AG04450 (cell line): ENCODE measurements at regions of chr17 and their contacts with region 1.

Region 1: GRCh38 chr17:57995076-57995956 is 7.3 kb upstream of the VEZF1 start:
- DNase-seq: peak; percentile 59
- H3K4me3 ChIP-seq: no peak overlapping the region
- H3K27ac ChIP-seq: no peak overlapping the region
- H3K27me3 ChIP-seq: no peaks in the 10 kb centered on the region
- CTCF ChIP-seq: peak; percentile 73

Region 2: DNA sequence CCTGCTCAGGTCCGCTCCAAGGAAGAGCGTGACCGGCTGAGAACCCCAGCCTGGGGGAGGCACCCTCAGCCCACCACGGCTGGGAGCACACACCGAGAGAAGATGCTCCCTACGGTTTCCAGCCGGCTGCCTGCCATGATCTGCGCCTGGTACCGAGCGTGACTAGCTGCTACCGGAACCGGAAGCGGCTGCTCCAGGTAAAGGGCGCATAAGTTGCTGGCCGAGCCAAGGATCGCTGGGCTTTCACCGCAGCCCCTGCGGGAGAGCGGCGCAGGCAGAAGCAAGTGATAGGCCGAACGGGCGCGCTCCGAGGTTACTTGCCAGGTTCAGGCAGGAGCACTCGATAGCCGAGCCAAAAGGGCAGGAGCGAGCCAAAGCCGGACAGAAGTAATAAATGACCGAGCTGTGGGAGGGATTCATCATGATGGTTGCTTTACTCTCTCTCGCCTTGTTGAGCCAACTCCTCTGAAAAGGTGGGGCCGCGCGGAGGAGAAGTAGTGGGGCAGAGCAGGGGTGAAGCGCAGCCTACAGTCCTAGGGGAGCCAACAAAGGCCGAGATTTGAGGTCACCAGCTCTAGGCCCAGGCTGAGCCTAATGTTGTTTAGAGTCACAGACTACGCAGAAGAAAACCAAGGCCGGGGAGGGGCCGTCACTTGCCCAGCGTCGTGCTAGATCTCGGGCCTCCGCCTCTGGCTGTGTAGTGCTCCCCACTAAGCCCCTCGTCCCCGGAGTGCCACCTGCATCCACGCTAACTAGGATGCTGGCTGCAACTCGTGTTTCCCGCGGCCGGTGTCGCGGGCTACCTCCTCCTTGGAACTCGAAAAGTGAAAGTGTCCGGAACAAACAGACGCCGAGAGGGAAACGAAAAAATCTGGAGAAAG is 145.2 kb before region 1 on chr17 and contains the start of gene MRPS23:
- CTCF ChIA-PET with region 1: interaction called, 661 read pairs
- POLR2A ChIA-PET with region 1: interaction called, 7 read pairs
- DNase-seq: peak; percentile 97
- H3K4me3 ChIP-seq: peak within 1 kb of the TSS; percentile 99
- H3K27ac ChIP-seq: peak within 1 kb of the TSS; percentile 85
- H3K27me3 ChIP-seq: no peaks in the 10 kb centered on the region
- CTCF ChIP-seq: no peak
- polyA plus RNA-seq, gene MRPS23: 27.5 and 34.1 TPM in 2 replicates

Region 3: GRCh38 chr17:57875309-57876115 is 119.8 kb before region 1 on chr17:
- CTCF ChIA-PET with region 1: interaction called, 52 read pairs
- POLR2A ChIA-PET with region 1: interaction called, 6 read pairs
- DNase-seq: peak; percentile 97
- H3K4me3 ChIP-seq: peak overlapping the region; percentile 42
- H3K27ac ChIP-seq: peak overlapping the region; percentile 100
- H3K27me3 ChIP-seq: no peaks in the 10 kb centered on the region
- CTCF ChIP-seq: peak; percentile 79

Region 4: DNA sequence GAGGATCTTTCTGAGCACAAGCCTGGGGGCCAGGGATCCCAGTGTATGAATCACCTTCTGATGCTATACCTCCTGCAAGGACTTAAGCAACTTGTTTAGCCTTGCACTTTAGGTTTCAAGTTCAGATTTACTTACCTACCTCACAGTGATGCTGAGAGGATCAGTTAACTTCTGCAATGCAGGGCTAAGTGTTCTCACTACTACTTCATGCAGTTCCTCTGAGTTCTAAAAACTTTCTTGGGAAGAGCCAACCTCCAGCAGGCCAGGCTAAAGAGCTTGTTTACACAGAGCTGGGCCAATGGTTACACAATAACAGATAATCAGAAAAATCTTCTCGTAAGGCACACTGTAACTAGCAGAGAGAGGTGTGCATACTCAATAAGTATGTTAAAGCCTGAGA is 20.3 kb before region 1 on chr17:
- CTCF ChIA-PET with region 1: interaction called, 13 read pairs
- POLR2A ChIA-PET with region 1: interaction called, 4 read pairs
- DNase-seq: no peak
- H3K4me3 ChIP-seq: no peak overlapping the region
- H3K27ac ChIP-seq: no peak overlapping the region
- H3K27me3 ChIP-seq: no peaks in the 10 kb centered on the region
- CTCF ChIP-seq: no peak

Region 5: GRCh38 chr17:58089115-58089514 is 93.8 kb after region 1 on chr17:
- CTCF ChIA-PET with region 1: interaction called, 11 read pairs
- POLR2A ChIA-PET with region 1: interaction called, 5 read pairs
- DNase-seq: no peak
- H3K4me3 ChIP-seq: no peak overlapping the region
- H3K27ac ChIP-seq: no peak overlapping the region
- H3K27me3 ChIP-seq: no peaks in the 10 kb centered on the region
- CTCF ChIP-seq: no peak